Pancreas (tissue), 10 donors: ENCODE measurements at regions of chr13 and their contacts with region 1.

Region 1: GRCh38 chr13:69857183-69857821 is 250.3 kb upstream of the ATXN8OS start:
- DNase-seq: no peak
- ATAC-seq: peak; percentile 67 to 85 (median 81)
- H3K4me3 ChIP-seq: no peak overlapping the region
- H3K27ac ChIP-seq: no peak overlapping the region
- H3K4me1 ChIP-seq: no peaks in the 10 kb centered on the region
- H3K27me3 ChIP-seq: no peaks in the 10 kb centered on the region
- CTCF ChIP-seq: peak; percentile 51 to 80 (median 66)

Region 2: DNA sequence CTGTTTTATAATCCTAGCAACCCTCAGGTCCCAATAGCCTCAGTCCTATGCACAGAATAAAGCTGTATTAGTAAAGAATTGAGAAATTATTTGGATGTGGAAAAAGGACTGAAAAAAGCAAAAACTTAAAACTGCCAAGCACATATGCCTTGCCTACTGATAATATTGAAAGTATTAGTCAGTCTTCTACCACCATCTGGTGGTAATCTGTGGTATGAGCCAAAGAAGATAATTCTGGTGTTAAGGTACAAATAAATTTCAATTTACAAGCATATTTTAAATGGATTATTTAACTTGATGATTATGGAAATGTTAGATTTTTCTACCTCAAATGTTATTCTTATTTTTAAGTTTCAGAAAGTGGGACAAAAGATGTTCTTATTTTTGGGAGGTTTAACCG is 711.3 kb after region 1 on chr13:
- intact Hi-C with region 1: loop called in 1 of 3 experiments (anchors 10 kb)
- DNase-seq: no peak
- ATAC-seq: peak; percentile 75 to 87 (median 86)
- H3K4me3 ChIP-seq: no peak overlapping the region
- H3K27ac ChIP-seq: no peak overlapping the region
- H3K4me1 ChIP-seq: no peaks in the 10 kb centered on the region
- H3K27me3 ChIP-seq: no peaks in the 10 kb centered on the region
- CTCF ChIP-seq: peak in 3 of 4 donors; percentile 28 to 57 (median 48)

Region 3: DNA sequence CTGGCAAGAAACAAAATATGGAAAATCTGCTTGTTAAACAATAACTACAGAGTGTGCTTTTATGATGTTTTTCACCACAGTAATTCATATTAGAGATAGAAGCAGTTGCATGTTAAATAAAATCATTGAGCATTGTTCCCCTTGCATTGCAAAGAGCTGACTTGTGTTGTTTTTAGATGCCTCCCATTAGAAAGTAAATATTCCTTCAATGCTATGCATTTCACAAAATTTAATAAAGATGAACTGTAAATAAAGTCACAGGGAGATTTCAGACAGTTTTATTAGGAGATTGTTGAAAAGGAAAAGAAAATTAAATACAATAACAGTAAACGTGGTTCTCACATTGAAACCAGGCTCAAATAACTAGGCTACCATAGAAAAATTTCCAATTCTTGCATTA is 1580.4 kb after region 1 on chr13:
- intact Hi-C with region 1: no loop called
- DNase-seq: no peak
- ATAC-seq: no peak
- H3K4me3 ChIP-seq: no peak overlapping the region
- H3K27ac ChIP-seq: no peak overlapping the region
- H3K4me1 ChIP-seq: no peaks in the 10 kb centered on the region
- H3K27me3 ChIP-seq: no peaks in the 10 kb centered on the region
- CTCF ChIP-seq: no peak